ENCODE measurements at regions of chr10 and their contacts with region 1.

Region 1: GRCh38 chr10:61356342-61356741 is 96.8 kb downstream of the TMEM26 start:
- DNase-seq: no peak
- ATAC-seq: no peak
- H3K4me3 ChIP-seq: no peak overlapping the region
- H3K27ac ChIP-seq: no peak overlapping the region
- H3K4me1 ChIP-seq: no peaks in the 10 kb centered on the region
- H3K27me3 ChIP-seq: no peaks in the 10 kb centered on the region
- CTCF ChIP-seq: no peak
- POLR2A ChIP-seq: no peak
- RAD21 ChIP-seq: no peak

Region 2: DNA sequence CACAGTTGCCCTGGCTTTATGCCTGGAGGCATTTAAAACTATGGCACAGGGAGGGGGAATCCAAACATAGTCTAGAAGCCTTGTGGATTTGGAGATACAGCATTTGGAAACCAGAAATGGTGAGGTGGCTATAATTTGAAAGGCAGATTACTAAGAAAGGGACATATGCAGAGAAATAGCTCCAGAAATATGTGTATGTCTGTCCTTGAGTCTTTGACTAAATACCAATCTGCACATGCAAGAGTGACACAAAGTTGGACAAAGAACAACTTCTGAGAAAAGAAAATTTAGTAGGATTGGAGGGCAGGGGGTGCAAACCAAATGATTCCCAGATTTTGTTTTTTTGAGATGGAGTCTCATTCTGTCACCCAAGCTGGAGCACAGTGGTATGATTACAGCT is 132.8 kb before region 1 on chr10:
- CTCF ChIA-PET with region 1: no interaction called
- POLR2A ChIA-PET with region 1: no interaction called
- dilution Hi-C with region 1: no loop called
- in situ Hi-C with region 1: no loop called
- intact Hi-C with region 1: loop called (anchors 10 kb)
- DNase-seq: no peak
- ATAC-seq: no peak
- H3K4me3 ChIP-seq: no peak overlapping the region
- H3K27ac ChIP-seq: no peak overlapping the region
- H3K4me1 ChIP-seq: no peaks in the 10 kb centered on the region
- H3K27me3 ChIP-seq: no peaks in the 10 kb centered on the region
- CTCF ChIP-seq: no peak
- POLR2A ChIP-seq: no peak
- RAD21 ChIP-seq: no peak

Measured in IMR-90 (cell line).